CD8-positive, alpha-beta T cell (primary cell): ENCODE measurements at regions of chr1 and their contacts with region 1.

Region 1: GRCh38 chr1:19405761-19406487 is 79.4 kb downstream of the CAPZB start:
- DNase-seq: peak in 4 of 9 experiments; percentile 21 to 52 (median 50)
- ATAC-seq: peak; percentile 73
- H3K4me3 ChIP-seq: no peak overlapping the region
- H3K4me3 Mint-ChIP-seq: peak overlapping the region; percentile 42
- H3K27ac ChIP-seq: peak overlapping the region in 1 of 2 experiments; percentile 33
- H3K27ac Mint-ChIP-seq: peak overlapping the region; percentile 78
- H3K4me1 ChIP-seq: peaks cover 53% of the 10 kb centered on the region
- H3K4me1 Mint-ChIP-seq: peaks cover 84% of the 10 kb centered on the region
- H3K27me3 ChIP-seq: no peaks in the 10 kb centered on the region
- H3K27me3 Mint-ChIP-seq: no peaks in the 10 kb centered on the region
- CTCF ChIP-seq: no peak

Region 2: GRCh38 chr1:19390901-19391595 is 14.9 kb before region 1 on chr1:
- CTCF ChIA-PET with region 1: interaction called, 32 read pairs
- POLR2A ChIA-PET with region 1: interaction called, 3 read pairs
- intact Hi-C with region 1: no loop called
- DNase-seq: peak; percentile 46 to 87 (median 68)
- ATAC-seq: peak; percentile 70
- H3K4me3 ChIP-seq: peak overlapping the region; percentile 34 to 38
- H3K4me3 Mint-ChIP-seq: peak overlapping the region; percentile 85
- H3K27ac ChIP-seq: peak overlapping the region; percentile 50 to 66
- H3K27ac Mint-ChIP-seq: peak overlapping the region; percentile 90
- H3K4me1 ChIP-seq: peaks cover 54% of the 10 kb centered on the region
- H3K4me1 Mint-ChIP-seq: peaks cover 77% of the 10 kb centered on the region
- H3K27me3 ChIP-seq: no peaks in the 10 kb centered on the region
- H3K27me3 Mint-ChIP-seq: no peaks in the 10 kb centered on the region
- CTCF ChIP-seq: peak; percentile 88

Region 3: DNA sequence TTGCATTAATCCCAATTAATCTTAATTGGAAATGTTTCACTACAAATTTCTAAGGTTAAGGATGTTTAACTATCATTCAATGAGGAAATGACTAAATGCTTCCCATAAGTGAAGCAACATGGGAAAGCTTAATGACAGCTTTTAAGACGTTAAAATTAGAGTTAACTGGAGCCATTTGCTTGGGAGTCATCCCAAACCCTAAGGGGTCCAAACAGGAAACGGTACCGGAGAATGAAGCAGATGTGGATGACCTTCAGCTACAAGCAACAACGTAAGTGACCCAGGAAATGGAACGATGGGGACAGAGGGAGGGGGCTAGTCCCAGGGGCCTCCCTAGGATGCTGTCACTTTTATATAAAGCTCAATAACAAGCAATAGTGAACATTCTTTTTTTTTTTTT is 17.2 kb after region 1 on chr1:
- CTCF ChIA-PET with region 1: interaction called, 3 read pairs
- POLR2A ChIA-PET with region 1: interaction called, 3 read pairs
- intact Hi-C with region 1: loop called in 1 of 2 experiments (anchors 2 kb)
- DNase-seq: no peak
- ATAC-seq: no peak
- H3K4me3 ChIP-seq: no peak overlapping the region
- H3K4me3 Mint-ChIP-seq: no peak overlapping the region
- H3K27ac ChIP-seq: no peak overlapping the region
- H3K27ac Mint-ChIP-seq: peak overlapping the region; percentile 88
- H3K4me1 ChIP-seq: peaks cover 65% of the 10 kb centered on the region
- H3K4me1 Mint-ChIP-seq: peaks cover 84% of the 10 kb centered on the region
- H3K27me3 ChIP-seq: no peaks in the 10 kb centered on the region
- H3K27me3 Mint-ChIP-seq: no peaks in the 10 kb centered on the region
- CTCF ChIP-seq: no peak

Region 4: GRCh38 chr1:19452221-19452663 is 46.3 kb after region 1 on chr1:
- CTCF ChIA-PET with region 1: no interaction called
- POLR2A ChIA-PET with region 1: no interaction called
- intact Hi-C with region 1: no loop called
- DNase-seq: no peak
- ATAC-seq: no peak
- H3K4me3 ChIP-seq: no peak overlapping the region
- H3K4me3 Mint-ChIP-seq: no peak overlapping the region
- H3K27ac ChIP-seq: no peak overlapping the region
- H3K27ac Mint-ChIP-seq: peak overlapping the region; percentile 80
- H3K4me1 ChIP-seq: peaks cover 92% of the 10 kb centered on the region
- H3K4me1 Mint-ChIP-seq: peaks cover 92% of the 10 kb centered on the region
- H3K27me3 ChIP-seq: no peaks in the 10 kb centered on the region
- H3K27me3 Mint-ChIP-seq: no peaks in the 10 kb centered on the region
- CTCF ChIP-seq: no peak

Region 5: GRCh38 chr1:20343149-20343937 is 937.4 kb after region 1 on chr1:
- CTCF ChIA-PET with region 1: no interaction called
- POLR2A ChIA-PET with region 1: no interaction called
- intact Hi-C with region 1: no loop called
- DNase-seq: peak in 5 of 9 experiments; percentile 13 to 44 (median 33)
- ATAC-seq: peak; percentile 49
- H3K4me3 ChIP-seq: no peak overlapping the region
- H3K4me3 Mint-ChIP-seq: no peak overlapping the region
- H3K27ac ChIP-seq: no peak overlapping the region
- H3K27ac Mint-ChIP-seq: no peak overlapping the region
- H3K4me1 ChIP-seq: no peaks in the 10 kb centered on the region
- H3K4me1 Mint-ChIP-seq: peaks cover 7% of the 10 kb centered on the region
- H3K27me3 ChIP-seq: peaks cover 0 to 5% of the 10 kb centered on the region in 2 experiments
- H3K27me3 Mint-ChIP-seq: peaks cover 33% of the 10 kb centered on the region
- CTCF ChIP-seq: no peak